GM10248 (cell line): ENCODE measurements at regions of chr1 and their contacts with region 1.

Region 1: DNA sequence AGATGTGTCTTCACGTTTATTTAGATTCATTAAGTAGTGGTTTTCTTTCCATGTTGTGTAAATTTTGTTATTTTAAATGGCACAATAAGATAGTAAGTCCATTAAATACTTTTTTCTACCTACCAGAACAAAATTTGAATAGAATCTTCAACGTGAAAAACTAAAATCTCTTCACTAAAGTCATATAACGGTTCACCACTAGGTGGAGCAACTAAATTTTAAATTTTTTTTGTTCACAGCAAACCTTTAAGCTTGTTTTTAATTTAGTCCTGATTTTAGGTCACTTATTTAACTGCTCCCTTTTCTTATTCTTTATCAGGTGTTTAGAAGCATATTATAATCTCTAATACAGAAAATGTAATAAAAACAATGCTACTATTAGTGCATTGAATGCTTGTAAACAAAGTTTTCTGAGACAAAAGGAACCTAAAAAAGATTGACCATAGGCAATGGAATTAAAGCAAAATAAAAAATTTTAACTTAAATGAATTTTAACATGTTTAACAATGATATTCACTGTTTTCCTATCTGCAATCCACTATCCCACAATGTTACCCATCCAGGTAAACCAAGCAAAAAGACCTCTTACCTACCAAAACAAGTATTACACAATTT is 28.3 kb upstream of the PKN2 start:
- DNase-seq: peak; percentile 20
- CTCF ChIP-seq: peak; percentile 38

Region 2: DNA sequence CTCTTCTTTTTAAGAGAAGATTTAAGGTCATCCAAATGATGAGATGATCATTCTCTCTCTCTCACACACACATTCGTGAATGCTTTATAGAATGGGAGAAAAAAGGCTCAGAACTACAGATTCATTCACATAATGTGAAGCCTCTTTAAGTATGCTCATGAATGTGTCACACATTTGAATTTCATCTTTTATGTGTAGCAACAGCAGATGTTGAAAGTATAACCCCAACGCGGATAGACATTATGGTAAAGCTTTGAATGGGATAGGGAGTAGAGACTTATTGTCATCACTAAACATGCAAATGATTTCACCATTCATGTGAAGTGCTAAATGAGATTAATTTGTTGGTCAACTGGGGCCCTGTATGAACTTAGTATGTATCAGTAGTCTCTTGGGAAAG is 12.6 kb after region 1 on chr1:
- CTCF ChIA-PET with region 1: interaction called, 40 read pairs
- POLR2A ChIA-PET with region 1: no interaction called
- DNase-seq: no peak
- CTCF ChIP-seq: no peak

Region 3: DNA sequence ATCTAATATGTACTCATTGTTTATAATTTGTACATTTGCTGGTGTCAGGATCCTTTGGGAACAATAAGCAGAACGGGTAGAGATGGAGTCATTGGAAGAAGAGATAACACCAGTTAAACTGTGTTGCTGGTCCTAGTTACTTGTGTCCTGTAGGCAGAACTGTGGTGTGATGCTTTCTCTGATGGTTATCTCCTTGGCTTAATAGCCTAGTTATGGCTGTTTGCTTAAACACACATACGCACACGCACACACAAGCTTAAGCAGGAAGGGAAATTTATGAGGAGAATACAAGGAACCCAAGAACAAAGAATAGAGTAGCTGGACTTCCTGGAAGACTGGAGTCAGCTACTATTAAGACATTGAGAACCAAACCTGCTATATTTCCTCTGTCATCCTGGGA is 22.6 kb after region 1 on chr1:
- CTCF ChIA-PET with region 1: interaction called, 28 read pairs
- POLR2A ChIA-PET with region 1: no interaction called
- DNase-seq: no peak
- CTCF ChIP-seq: no peak

Region 4: GRCh38 chr1:88751714-88752113 is 95.9 kb after region 1 on chr1:
- CTCF ChIA-PET with region 1: no interaction called
- POLR2A ChIA-PET with region 1: no interaction called
- DNase-seq: no peak
- CTCF ChIP-seq: no peak

Region 5: GRCh38 chr1:88877382-88877825 is 221.6 kb after region 1 on chr1:
- CTCF ChIA-PET with region 1: interaction called, 142 read pairs
- POLR2A ChIA-PET with region 1: no interaction called
- DNase-seq: no peak
- CTCF ChIP-seq: peak; percentile 49